ENCODE measurements at regions of chr7 and their contacts with region 1.

Region 1: GRCh38 chr7:51029701-51030191 is 247.1 kb upstream of the GRB10 start:
- DNase-seq: no peak
- H3K4me3 ChIP-seq: no peak overlapping the region
- H3K27ac ChIP-seq: no peak overlapping the region
- H3K4me1 ChIP-seq: no peaks in the 10 kb centered on the region
- H3K27me3 ChIP-seq: no peaks in the 10 kb centered on the region
- CTCF ChIP-seq: no peak

Region 2: GRCh38 chr7:50962962-50963374 is 66.8 kb before region 1 on chr7:
- intact Hi-C with region 1: loop called (anchors 10 kb)
- DNase-seq: peak; percentile 94
- H3K4me3 ChIP-seq: no peak overlapping the region
- H3K27ac ChIP-seq: no peak overlapping the region
- H3K4me1 ChIP-seq: no peaks in the 10 kb centered on the region
- H3K27me3 ChIP-seq: no peaks in the 10 kb centered on the region
- CTCF ChIP-seq: no peak

Region 3: GRCh38 chr7:51134013-51134441 is 104.3 kb after region 1 on chr7:
- intact Hi-C with region 1: no loop called
- DNase-seq: no peak
- H3K4me3 ChIP-seq: no peak overlapping the region
- H3K27ac ChIP-seq: no peak overlapping the region
- H3K4me1 ChIP-seq: no peaks in the 10 kb centered on the region
- H3K27me3 ChIP-seq: no peaks in the 10 kb centered on the region
- CTCF ChIP-seq: no peak

Measured in colonic mucosa (tissue), 4 donors.